Common myeloid progenitor, CD34-positive (primary cell): ENCODE measurements at regions of chr1 and their contacts with region 1.

Region 1: DNA sequence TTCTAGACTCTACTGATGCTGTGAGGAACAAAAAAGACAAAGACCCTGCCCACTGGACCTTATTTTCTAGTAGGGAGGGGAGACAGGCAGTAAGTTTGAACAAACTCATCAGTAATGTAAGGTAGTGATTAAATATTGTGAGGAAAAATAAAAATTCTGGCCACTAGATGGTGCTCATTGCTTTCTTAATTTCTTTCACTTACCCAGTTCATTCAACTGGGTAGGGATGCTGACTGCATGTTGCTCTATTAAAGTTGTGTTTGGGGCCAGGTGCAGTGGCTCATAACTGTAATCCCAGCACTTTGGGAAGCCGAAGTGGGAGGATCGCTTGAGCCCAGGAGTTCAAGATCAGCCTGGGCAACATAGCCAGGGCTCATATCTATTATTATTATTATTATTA is 6.3 kb upstream of the KYAT3 start:
- DNase-seq: peak; percentile 75 to 87 (median 82)
- H3K4me3 ChIP-seq: no peak overlapping the region
- H3K27ac ChIP-seq: no peak overlapping the region
- H3K4me1 ChIP-seq: peaks cover 1 to 11% (median 7%) of the 10 kb centered on the region in 4 experiments
- H3K27me3 ChIP-seq: no peaks in the 10 kb centered on the region

Region 2: GRCh38 chr1:88983791-88984559 is 14.7 kb before region 1 on chr1:
- CTCF ChIA-PET with region 1: interaction called, 14 read pairs
- POLR2A ChIA-PET with region 1: no interaction called
- DNase-seq: peak; percentile 73 to 86 (median 85)
- H3K4me3 ChIP-seq: peak overlapping the region in 2 of 7 experiments; percentile 19 to 29
- H3K27ac ChIP-seq: no peak overlapping the region
- H3K4me1 ChIP-seq: peaks cover 0 to 24% (median 12%) of the 10 kb centered on the region in 4 experiments
- H3K27me3 ChIP-seq: no peaks in the 10 kb centered on the region

Region 3: GRCh38 chr1:89022167-89022959 is 23.6 kb after region 1 on chr1 and contains the start of gene GBP3:
- CTCF ChIA-PET with region 1: no interaction called
- POLR2A ChIA-PET with region 1: no interaction called
- DNase-seq: peak; percentile 51 to 86 (median 77)
- H3K4me3 ChIP-seq: peak within 1 kb of the TSS in 6 of 7 experiments; percentile 80 to 100 (median 91)
- H3K27ac ChIP-seq: peak within 1 kb of the TSS; percentile 84 to 90
- H3K4me1 ChIP-seq: peaks cover 12 to 20% (median 16%) of the 10 kb centered on the region in 4 experiments
- H3K27me3 ChIP-seq: no peaks in the 10 kb centered on the region

Region 4: DNA sequence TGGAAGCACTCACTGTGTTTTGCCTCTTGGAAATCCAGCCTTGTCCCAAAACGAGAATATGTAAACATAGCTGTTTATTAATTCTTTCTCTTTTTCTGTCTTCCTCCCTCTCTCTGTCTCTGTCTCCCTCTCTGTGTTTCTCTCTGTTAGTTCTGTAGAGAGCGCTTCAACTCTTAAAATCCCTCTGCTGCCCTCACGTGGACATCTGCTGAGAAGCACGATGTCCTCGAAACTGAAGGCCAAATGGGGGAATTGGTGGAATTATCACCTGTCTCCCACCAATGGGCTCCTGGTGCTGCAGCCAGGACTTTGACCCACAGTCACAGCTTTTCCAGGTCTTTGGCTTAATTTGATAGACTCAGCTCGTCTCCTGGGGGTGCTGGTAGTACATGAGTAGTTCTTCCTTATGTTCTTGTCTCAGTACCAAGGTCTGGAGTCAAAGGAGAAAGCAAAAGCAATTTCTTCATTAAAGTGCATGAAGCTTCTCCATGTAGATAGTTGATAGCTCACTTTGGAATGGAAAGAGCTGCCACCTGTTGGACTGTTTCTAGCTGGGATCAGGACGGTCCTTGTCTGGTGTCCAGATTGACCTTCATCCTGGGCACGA is 359.7 kb after region 1 on chr1:
- CTCF ChIA-PET with region 1: interaction called, 13 read pairs
- POLR2A ChIA-PET with region 1: no interaction called
- DNase-seq: peak; percentile 80 to 88 (median 83)
- H3K4me3 ChIP-seq: no peak overlapping the region
- H3K27ac ChIP-seq: no peak overlapping the region
- H3K4me1 ChIP-seq: peaks cover 0 to 23% (median 5%) of the 10 kb centered on the region in 4 experiments
- H3K27me3 ChIP-seq: no peaks in the 10 kb centered on the region

Region 5: GRCh38 chr1:89454845-89455521 is 456.3 kb after region 1 on chr1:
- CTCF ChIA-PET with region 1: interaction called, 20 read pairs
- POLR2A ChIA-PET with region 1: no interaction called
- DNase-seq: peak; percentile 56 to 79 (median 76)
- H3K4me3 ChIP-seq: no peak overlapping the region
- H3K27ac ChIP-seq: no peak overlapping the region
- H3K4me1 ChIP-seq: no peaks in the 10 kb centered on the region
- H3K27me3 ChIP-seq: peaks cover 0 to 27% (median 11%) of the 10 kb centered on the region in 5 experiments